T-cell (primary cell): ENCODE measurements at regions of chr7 and their contacts with region 1.

Region 1: DNA sequence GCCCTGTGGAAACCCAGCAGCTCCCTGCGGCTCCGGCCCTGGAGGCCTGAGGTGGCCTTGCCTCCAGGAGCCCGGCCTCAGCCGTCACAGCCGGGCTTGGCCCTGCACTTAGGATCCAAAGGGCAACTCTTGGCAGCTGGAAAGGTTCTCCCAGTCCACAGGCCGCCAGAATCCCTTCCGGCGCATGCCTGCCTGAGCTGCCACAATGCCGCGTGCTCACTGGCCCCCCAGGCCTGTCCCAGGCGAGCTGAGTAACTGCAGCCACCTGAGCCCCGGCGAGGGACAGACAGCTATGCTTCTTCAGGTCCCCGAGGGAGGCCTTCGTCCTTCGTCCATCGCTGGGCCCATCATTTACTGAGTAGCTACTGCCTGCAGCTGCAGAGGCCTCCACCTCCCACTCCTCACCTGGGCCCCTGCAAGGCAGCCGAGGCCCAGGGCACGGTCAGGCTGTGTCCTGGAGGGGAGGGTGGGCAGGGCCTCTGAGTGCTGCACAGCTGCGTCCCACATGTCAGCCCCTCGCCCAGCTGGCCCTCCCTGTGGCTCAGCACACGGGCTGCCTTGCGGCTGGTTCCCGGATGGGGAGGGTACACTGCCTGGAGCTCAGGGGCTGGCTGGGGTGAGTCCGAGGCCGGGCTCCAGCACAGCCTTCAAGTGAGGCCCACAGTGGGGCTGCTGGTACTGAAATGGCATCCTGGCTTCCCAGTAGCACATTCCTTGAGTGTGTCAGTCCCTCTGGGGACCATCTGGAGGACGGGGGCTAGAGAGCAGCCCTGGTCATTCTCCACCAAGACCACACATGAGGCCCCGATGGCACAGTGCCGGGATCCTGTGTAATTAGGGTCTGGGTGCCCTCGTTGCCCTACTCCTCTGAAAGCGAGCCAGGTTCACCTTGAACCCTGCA is 172.5 kb downstream of the ELFN1 start:
- DNase-seq: peak in 1 of 35 experiments; percentile 1
- ATAC-seq: no peak
- H3K4me3 ChIP-seq: no peak overlapping the region
- H3K4me3 Mint-ChIP-seq: no peak overlapping the region
- H3K27ac ChIP-seq: no peak overlapping the region
- H3K27ac Mint-ChIP-seq: no peak overlapping the region
- H3K4me1 ChIP-seq: no peaks in the 10 kb centered on the region
- H3K4me1 Mint-ChIP-seq: peaks cover 4 to 5% (median 4%) of the 10 kb centered on the region in 3 donors
- H3K27me3 ChIP-seq: no peaks in the 10 kb centered on the region
- H3K27me3 Mint-ChIP-seq: no peaks in the 10 kb centered on the region

Region 2: GRCh38 chr7:1754345-1754946 is 88.1 kb before region 1 on chr7:
- CTCF ChIA-PET with region 1: no interaction called
- POLR2A ChIA-PET with region 1: interaction called in 1 of 2 experiments, 11 read pairs
- DNase-seq: no peak
- ATAC-seq: no peak
- H3K4me3 ChIP-seq: no peak overlapping the region
- H3K4me3 Mint-ChIP-seq: no peak overlapping the region
- H3K27ac ChIP-seq: no peak overlapping the region
- H3K27ac Mint-ChIP-seq: peak overlapping the region in 1 of 2 donors; percentile 55
- H3K4me1 ChIP-seq: no peaks in the 10 kb centered on the region
- H3K4me1 Mint-ChIP-seq: peaks cover 3 to 9% (median 6%) of the 10 kb centered on the region in 3 donors
- H3K27me3 ChIP-seq: peaks cover 0 to 33% of the 10 kb centered on the region in 2 experiments
- H3K27me3 Mint-ChIP-seq: peaks cover 0 to 12% of the 10 kb centered on the region in 2 donors